Astrocyte of the cerebellum (primary cell): ENCODE measurements at regions of chr2 and their contacts with region 1.

Region 1: DNA sequence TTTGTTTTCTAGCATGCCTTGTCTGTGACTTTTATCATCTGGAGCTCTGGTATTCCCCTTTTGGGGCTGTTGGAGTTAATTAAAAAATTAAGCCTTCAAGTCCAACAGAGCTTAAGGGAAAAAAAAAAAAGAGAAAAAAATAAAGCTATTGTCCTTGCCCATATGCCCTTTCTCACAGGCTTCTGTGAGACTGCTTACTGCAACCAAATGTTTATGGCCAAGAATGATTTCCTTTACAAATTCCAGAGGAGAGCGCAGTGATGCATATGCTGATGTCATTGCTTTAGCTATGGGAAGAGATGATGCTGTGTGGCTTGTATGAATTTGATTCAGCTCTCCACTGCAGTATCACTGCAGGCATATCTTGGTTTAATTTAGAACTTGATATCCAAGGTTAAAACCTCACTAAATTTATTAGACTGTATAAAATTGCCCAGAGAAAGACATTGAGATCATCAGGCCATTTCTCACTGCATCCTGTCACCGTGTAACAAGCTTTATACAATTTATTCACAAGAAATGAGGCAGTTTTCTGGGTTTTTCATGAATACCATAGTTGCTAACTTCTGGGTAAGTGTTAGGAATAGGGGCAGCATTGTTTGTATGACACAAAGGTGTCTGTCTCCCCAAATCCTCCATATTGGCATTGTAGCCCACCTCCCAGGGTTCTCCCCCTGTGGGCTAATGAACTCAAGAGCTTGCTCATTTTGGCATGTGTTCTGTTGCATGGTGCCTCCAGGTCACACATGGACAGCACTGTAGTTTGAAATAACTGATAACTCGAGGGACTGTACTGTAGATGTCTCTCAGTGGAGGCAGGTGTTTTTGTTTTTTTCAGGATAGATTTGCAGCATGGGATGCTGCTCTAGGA is 85.0 kb downstream of the TANC1 start:
- DNase-seq: peak; percentile 71
- H3K4me3 ChIP-seq: no peak overlapping the region
- CTCF ChIP-seq: no peak

Region 2: GRCh38 chr2:158969715-158970245 is 83.6 kb before region 1 on chr2:
- in situ Hi-C with region 1: loop called (anchors 10 kb)
- DNase-seq: no peak
- H3K4me3 ChIP-seq: peak overlapping the region; percentile 93
- CTCF ChIP-seq: no peak